Common myeloid progenitor, CD34-positive (primary cell): ENCODE measurements at regions of chr6 and their contacts with region 1.

Region 1: GRCh38 chr6:108947114-108947854 is 99.1 kb downstream of the ARMC2 start:
- DNase-seq: peak in 2 of 3 donors; percentile 73 to 85
- H3K4me3 ChIP-seq: peak overlapping the region in 1 of 7 experiments; percentile 8
- H3K27ac ChIP-seq: no peak overlapping the region
- H3K4me1 ChIP-seq: peaks cover 9 to 57% (median 29%) of the 10 kb centered on the region in 4 experiments
- H3K27me3 ChIP-seq: no peaks in the 10 kb centered on the region

Region 2: DNA sequence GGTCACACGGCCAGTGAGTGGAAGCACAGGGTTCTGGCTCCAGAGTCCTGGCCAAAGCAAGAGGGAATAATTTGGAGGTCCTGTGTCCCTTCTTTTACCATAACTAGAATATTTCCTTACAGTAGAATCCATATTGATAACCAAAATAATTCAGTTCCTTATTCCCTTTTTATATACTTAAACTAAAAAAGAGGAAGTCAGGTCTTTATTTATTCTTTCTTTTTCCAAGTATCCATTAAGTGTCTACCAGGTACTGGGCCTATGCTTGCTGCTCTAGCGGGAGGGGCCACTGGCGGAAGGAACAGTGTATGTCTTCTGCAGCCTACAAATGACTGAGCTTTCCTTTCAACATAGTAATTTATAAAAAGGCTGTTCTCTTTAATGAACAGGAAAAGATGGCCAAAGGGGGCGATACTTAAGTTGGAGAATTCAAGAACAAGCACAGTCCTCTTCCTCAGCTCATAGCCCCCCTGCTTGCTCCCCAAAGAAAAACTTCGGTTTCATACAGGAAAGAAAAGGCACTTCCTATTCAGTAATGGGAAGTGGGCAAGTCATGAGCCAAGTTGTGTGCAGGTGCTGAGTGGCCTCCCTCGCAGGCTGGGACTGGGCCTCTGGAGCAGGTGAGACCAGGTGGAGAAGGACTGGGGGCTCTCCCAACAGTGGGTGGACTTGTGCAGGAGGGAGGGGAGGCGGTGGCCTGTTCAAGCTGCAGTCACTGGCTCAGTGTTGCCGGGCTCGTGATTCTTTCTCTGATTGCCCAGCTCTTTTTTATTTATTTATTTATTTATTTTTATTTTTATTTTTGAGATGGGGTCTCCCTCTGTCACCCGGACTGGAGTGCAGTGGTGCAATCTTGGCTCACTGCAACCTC is 11.9 kb after region 1 on chr6:
- CTCF ChIA-PET with region 1: interaction called, 14 read pairs
- POLR2A ChIA-PET with region 1: interaction called, 3 read pairs
- DNase-seq: peak in 2 of 3 donors; percentile 65 to 72
- H3K4me3 ChIP-seq: no peak overlapping the region
- H3K27ac ChIP-seq: no peak overlapping the region
- H3K4me1 ChIP-seq: peaks cover 0 to 37% (median 15%) of the 10 kb centered on the region in 4 experiments
- H3K27me3 ChIP-seq: no peaks in the 10 kb centered on the region

Region 3: GRCh38 chr6:108966855-108967755 is 19.8 kb after region 1 on chr6:
- CTCF ChIA-PET with region 1: interaction called, 14 read pairs
- POLR2A ChIA-PET with region 1: interaction called, 3 read pairs
- DNase-seq: peak; percentile 84 to 97 (median 95)
- H3K4me3 ChIP-seq: peak overlapping the region in 4 of 7 experiments; percentile 17 to 57 (median 46)
- H3K27ac ChIP-seq: peak overlapping the region; percentile 75 to 85
- H3K4me1 ChIP-seq: peaks cover 0 to 47% (median 34%) of the 10 kb centered on the region in 4 experiments
- H3K27me3 ChIP-seq: no peaks in the 10 kb centered on the region